ENCODE measurements at regions of chr17 and their contacts with region 1.

Region 1: DNA sequence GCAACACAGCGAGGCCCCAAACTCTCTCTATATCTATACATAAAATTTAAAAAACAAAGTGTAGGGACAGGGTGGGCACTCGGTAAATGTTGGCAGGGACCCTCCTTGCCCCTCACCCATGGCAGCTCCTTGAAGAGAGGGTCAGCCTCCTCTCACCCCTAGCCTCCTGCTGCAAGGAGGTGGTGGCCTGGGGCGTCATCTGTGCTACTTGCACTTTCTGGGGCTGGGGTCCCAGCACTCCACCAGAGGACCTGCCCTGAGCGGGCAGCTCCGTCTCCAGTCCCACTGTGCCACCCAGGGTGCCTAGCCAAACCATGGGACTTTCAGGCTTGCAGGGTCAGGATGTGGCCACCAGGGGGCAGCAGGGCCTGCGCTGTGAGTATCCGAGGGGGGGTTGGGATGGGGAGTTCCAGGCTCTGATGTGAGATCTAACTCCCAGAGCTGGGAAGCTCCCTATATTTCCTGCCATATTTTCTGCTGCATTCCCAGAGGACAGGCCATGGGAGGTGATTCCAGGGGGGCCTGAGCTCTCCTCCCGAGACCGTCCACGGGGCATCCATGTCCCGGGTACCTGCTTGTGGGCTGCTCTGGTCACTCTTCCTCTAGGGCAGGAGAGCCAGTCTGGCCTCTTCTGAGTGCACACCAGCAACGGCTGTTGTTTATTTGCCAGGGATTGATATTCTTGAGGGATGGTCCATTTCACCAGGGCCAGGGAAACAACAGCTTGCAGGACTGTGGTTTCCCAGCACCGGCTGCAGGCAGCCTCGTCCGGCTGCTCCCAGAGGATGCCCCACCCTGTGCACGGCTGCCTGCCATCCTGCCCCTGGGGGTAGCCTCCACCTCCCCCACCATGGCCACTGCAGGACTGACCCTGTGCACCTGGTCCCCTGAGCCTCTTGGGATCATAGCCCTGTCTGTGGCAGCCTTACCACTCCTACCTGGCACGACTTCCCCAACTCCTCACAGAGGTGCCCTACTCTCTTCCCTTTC is 1.1 kb downstream of the GPR142 start:
- DNase-seq: peak; percentile 78
- ATAC-seq: peak; percentile 77
- H3K4me3 Mint-ChIP-seq: no peak overlapping the region
- H3K27ac Mint-ChIP-seq: no peak overlapping the region
- H3K4me1 Mint-ChIP-seq: peaks cover 15% of the 10 kb centered on the region
- H3K27me3 Mint-ChIP-seq: peaks cover 7% of the 10 kb centered on the region

Region 2: DNA sequence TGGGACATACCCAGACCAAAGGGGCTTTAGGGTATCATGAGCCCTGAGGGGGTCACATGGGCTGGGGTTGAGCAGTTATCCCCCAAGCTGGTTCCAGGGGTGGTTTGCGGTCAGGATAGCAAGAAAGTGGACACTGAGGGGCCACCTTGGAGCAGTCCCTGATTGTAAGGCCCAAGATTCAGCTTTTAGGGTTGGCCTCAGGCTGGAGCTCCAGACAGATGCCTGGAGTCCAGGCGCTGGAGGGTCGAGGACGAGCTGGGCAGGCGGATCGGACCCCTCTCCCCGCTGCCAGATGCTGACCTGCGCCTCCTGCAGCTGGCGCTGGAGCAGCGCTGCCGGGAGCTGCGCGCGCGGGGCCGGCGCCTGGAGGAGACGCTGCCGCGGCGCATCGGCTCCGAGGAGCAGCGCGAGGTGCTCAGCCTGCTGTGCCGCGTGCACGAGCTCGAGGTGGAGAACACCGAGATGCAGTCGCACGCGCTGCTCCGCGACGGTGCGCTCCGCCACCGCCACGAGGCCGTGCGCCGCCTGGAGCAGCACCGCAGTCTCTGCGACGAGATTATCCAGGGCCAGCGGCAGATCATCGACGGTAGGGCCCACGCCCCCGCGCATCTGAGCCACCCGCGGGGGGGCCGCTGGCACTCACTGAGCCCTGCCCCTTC is 16.7 kb before region 1 on chr17:
- CTCF ChIA-PET with region 1: interaction called, 20 read pairs
- POLR2A ChIA-PET with region 1: interaction called, 3 read pairs
- DNase-seq: no peak
- ATAC-seq: peak; percentile 37
- H3K4me3 Mint-ChIP-seq: no peak overlapping the region
- H3K27ac Mint-ChIP-seq: no peak overlapping the region
- H3K4me1 Mint-ChIP-seq: no peaks in the 10 kb centered on the region
- H3K27me3 Mint-ChIP-seq: peaks cover 54% of the 10 kb centered on the region

Region 3: DNA sequence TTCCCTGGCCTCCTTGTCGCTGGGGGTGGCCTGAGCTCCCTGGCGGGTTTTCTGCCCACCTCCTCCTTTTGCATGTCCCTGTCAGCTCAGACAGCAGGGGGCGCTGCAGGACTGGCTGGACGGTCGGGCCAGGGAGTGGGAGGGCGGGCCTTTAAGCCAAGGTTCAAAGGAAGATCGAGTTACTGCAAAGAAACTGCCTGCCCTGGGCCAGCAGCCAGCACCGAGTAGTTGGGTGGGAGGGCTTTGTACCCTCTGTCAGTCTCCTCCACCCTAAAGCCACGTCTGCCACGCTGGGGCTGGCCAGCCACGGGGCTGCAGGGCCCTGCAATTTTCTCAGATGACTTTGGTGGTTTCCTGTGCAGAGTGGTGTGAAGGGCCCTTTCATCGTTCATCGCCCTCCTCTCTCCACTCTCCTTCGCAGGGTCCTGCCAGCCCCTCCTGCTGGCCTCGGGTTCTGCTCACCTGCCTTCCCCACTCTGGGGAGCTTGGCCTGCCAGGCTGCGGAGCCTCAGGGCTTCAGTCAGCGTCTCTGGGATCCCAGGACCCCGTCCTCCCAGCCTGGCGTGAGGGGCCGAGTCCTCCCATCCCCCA is 11.2 kb after region 1 on chr17:
- CTCF ChIA-PET with region 1: interaction called, 58 read pairs
- POLR2A ChIA-PET with region 1: no interaction called
- DNase-seq: peak; percentile 92
- ATAC-seq: peak; percentile 92
- H3K4me3 Mint-ChIP-seq: no peak overlapping the region
- H3K27ac Mint-ChIP-seq: no peak overlapping the region
- H3K4me1 Mint-ChIP-seq: peaks cover 13% of the 10 kb centered on the region
- H3K27me3 Mint-ChIP-seq: peaks cover 8% of the 10 kb centered on the region

Region 4: DNA sequence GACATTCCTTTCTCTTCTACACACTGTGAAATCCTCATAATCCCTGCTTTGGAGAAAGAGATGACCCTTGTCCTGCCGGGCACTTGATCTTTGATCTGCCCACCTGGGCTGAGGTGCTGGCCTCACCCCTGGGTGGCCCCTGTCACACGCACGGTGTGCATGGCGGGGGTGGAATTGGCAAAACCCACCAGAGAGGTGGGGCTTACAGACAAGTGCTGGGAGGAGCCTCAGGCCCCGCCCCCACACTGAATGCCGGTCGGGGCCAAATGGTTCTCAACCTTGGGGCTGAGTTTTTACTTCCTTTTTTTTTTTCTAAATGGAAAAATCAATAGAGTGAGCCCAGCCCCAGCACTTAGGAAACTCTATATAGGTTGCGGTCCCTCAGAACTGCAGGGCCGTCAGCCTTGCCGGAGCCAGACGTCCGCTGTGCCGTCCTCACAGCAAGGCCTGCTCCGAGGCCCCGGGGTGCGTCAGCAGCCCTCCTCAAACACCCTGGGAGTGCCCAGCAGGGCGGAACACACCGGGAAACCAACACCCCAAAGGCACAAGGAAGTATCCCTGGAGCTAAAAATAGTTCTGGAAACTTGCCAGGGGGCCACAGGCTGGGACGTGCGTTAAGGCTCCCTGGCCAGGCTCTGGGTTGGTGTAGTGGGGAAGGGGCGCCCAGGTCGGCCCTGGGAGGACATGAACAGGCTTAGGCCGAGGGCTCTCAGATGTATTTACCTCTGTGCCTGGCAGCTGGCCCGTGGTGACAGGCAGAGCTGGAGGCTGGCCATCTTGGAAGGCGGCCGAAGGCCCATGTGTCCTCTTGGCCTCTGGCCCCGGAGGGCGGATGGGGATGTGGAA is 74.5 kb after region 1 on chr17:
- CTCF ChIA-PET with region 1: interaction called, 12 read pairs
- POLR2A ChIA-PET with region 1: interaction called, 3 read pairs
- DNase-seq: no peak
- ATAC-seq: peak; percentile 41
- H3K4me3 Mint-ChIP-seq: no peak overlapping the region
- H3K27ac Mint-ChIP-seq: no peak overlapping the region
- H3K4me1 Mint-ChIP-seq: peaks cover 6% of the 10 kb centered on the region
- H3K27me3 Mint-ChIP-seq: peaks cover 10% of the 10 kb centered on the region

Region 5: DNA sequence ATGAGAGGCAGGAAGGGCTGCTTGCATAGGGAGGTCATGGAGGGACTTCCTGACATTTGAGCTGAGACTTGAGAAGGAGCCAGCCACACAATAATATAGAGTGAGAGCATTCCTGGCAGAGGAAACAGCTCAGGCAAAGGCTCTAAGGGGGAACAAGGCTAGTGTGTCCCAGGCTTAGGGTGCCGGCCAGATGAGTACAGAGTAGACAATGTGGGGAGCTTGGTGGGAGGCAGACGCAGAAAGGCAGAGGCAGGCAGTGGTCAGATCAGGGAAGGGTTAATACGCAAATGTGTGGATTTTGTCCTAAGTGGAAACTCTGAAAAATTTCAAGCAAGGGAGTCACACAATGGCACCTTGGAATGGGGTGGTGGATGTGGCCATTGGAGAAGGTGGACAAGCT is 131.6 kb after region 1 on chr17:
- CTCF ChIA-PET with region 1: interaction called, 12 read pairs
- POLR2A ChIA-PET with region 1: no interaction called
- DNase-seq: no peak
- ATAC-seq: no peak
- H3K4me3 Mint-ChIP-seq: no peak overlapping the region
- H3K27ac Mint-ChIP-seq: no peak overlapping the region
- H3K4me1 Mint-ChIP-seq: no peaks in the 10 kb centered on the region
- H3K27me3 Mint-ChIP-seq: no peaks in the 10 kb centered on the region

Region 6: GRCh38 chr17:74601944-74602572 is 233.7 kb after region 1 on chr17:
- CTCF ChIA-PET with region 1: interaction called, 10 read pairs
- POLR2A ChIA-PET with region 1: no interaction called
- DNase-seq: peak; percentile 56
- ATAC-seq: peak; percentile 51
- H3K4me3 Mint-ChIP-seq: no peak overlapping the region
- H3K27ac Mint-ChIP-seq: peak overlapping the region; percentile 10
- H3K4me1 Mint-ChIP-seq: peaks cover 29% of the 10 kb centered on the region
- H3K27me3 Mint-ChIP-seq: peaks cover 34% of the 10 kb centered on the region

Measured in activated CD8-positive, alpha-beta T cell treated with anti-CD3 and anti-CD28 coated beads, Interleukin-2, amount 10 ng/mL, durations not matched to agents 7 days and 5 days (primary cell).